Ovary (tissue), 10 donors: ENCODE measurements at regions of chr15 and their contacts with region 1.

Region 1: DNA sequence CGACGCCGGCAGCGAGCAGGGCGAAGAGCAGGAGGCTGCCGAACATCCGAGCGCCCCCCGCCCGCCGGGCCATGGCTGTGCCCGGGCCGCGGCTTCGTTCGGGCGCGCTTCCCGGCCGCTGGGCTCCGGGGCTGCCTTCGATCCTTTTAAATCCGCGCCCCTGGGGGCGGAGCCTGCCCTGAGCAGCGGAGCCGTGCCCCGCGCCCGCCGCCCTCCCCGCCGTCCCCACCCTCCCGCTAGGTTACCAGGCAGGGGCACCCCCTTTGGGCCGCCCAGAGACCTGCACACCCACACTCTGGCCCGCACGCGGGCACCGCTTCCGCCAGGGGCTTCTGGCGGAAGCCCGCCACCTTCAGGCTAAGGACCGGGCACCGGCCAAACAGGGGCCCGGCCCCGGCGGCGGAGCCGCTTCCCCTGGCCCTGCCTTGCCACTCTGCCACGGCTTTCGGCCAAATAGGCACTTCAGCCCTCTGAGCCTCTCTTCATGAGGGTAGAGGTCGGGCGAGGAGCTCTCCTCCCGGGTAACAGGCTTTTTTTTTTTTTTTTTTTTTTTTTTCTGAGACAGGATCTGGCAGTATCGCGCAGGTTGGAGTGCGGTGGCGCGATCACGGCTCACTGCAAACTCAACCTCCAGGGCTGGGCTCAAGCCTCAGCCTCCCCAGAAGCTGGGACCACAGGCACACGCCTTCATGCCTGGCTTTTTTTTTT is at the start of gene NMB:
- DNase-seq: peak; percentile 76 to 86 (median 82)
- H3K4me3 ChIP-seq: peak within 1 kb of the TSS; percentile 69
- H3K27ac ChIP-seq: peak within 1 kb of the TSS; percentile 63 to 85
- H3K4me1 ChIP-seq: peaks cover 2% of the 10 kb centered on the region
- H3K27me3 ChIP-seq: no peaks in the 10 kb centered on the region
- CTCF ChIP-seq: peak in 2 of 3 donors; percentile 56 to 77
- EP300 ChIP-seq: no peak
- POLR2A ChIP-seq: no peak
- total RNA-seq, gene NMB: 5.1 to 11.5 (median 7.3) TPM

Region 2: GRCh38 chr15:84600851-84601838 is 57.1 kb before region 1 on chr15 and contains the start of gene ZSCAN2:
- intact Hi-C with region 1: loop called in 1 of 4 experiments (anchors 10 kb)
- DNase-seq: peak; percentile 92 to 96 (median 94)
- H3K4me3 ChIP-seq: peak within 1 kb of the TSS; percentile 85
- H3K27ac ChIP-seq: peak within 1 kb of the TSS; percentile 14 to 78
- H3K4me1 ChIP-seq: peaks cover 5% of the 10 kb centered on the region
- H3K27me3 ChIP-seq: no peaks in the 10 kb centered on the region
- CTCF ChIP-seq: no peak
- EP300 ChIP-seq: no peak
- POLR2A ChIP-seq: peak; percentile 26
- total RNA-seq, gene ZSCAN2: 5.6 to 13.3 (median 9.2) TPM

Region 3: GRCh38 chr15:84826369-84826823 is 168.2 kb after region 1 on chr15:
- intact Hi-C with region 1: loop called in 3 of 4 experiments (anchors 5 to 10 kb)
- DNase-seq: peak in 2 of 5 donors; percentile 34 to 57
- H3K4me3 ChIP-seq: no peak overlapping the region
- H3K27ac ChIP-seq: peak overlapping the region in 1 of 2 donors; percentile 55
- H3K4me1 ChIP-seq: peaks cover 24% of the 10 kb centered on the region
- H3K27me3 ChIP-seq: no peaks in the 10 kb centered on the region
- CTCF ChIP-seq: no peak
- EP300 ChIP-seq: no peak
- POLR2A ChIP-seq: no peak

Region 4: GRCh38 chr15:84915011-84915958 is 257.1 kb after region 1 on chr15:
- intact Hi-C with region 1: loop called in 2 of 4 experiments (anchors 10 kb)
- DNase-seq: peak; percentile 57 to 74 (median 58)
- H3K4me3 ChIP-seq: no peak overlapping the region
- H3K27ac ChIP-seq: peak overlapping the region; percentile 54 to 60
- H3K4me1 ChIP-seq: peaks cover 18% of the 10 kb centered on the region
- H3K27me3 ChIP-seq: no peaks in the 10 kb centered on the region
- CTCF ChIP-seq: no peak
- EP300 ChIP-seq: no peak
- POLR2A ChIP-seq: no peak